ENCODE measurements at regions of chr19 and their contacts with region 1.

Region 1: DNA sequence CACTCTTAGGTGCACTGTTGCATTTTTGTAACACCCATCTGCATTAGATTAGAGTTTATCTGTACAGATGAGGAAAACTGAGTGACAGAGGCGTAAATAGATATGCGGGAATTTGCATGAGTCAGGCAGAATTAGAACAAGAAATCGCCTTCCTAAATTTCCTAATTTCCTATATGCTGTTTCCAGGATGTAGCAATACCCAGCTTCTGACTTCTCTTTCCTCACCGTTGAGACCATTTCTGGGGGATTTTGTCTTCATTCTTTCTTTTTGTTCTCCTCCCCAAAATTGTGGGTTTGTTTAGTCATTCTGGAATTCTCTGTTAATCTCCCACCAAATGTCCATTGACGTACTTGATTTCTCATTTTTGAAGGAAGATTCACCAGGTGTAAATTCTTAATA is 10.6 kb upstream of the ZNF792 start:
- DNase-seq: no peak
- ATAC-seq: no peak
- H3K4me3 Mint-ChIP-seq: peak overlapping the region in 7 of 10 donors; percentile 8 to 90 (median 75)
- H3K27ac Mint-ChIP-seq: peak overlapping the region in 9 of 10 donors; percentile 69 to 95 (median 94)
- H3K4me1 Mint-ChIP-seq: peaks cover 17 to 52% (median 33%) of the 10 kb centered on the region in 4 donors
- H3K27me3 Mint-ChIP-seq: peaks cover 0 to 2% (median 0%) of the 10 kb centered on the region in 5 donors

Region 2: DNA sequence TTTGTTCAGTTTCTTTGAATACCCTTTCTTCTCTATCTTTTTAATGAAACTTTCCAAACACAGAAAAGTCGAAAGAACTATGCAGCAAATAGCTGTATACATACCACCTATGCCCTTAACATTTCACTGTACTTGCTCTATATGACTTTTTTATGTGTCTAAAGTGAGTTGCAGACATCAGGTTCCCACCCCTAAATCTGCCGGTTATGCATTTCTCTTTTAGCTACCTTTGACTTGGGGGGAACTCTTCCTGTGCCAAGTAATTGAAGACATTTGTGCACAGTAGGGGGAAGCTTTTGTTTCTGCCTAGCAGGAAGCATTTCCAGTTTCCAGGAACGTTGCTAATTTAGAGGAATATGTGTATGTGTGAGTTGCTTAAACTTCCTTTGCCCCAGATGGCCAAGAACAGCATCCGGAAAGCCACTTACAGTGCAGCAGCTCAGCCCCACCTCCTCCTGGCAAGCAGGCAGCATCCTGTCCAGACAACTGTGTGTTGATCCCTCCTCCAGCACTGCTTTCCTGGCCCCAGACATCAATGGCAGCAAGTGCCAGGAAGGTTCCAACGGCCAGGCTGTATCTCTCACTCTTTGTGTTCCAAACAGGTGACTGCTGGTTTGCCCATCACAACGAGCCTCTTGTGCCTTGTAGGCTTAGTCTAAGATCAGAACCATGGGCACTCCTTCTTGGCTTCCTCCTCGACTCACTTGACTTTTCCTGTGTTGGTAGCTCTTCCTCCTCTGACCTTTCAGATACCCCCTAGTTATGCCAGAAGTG is 10.8 kb after region 1 on chr19:
- POLR2A ChIA-PET with region 1: interaction called, 1,459 read pairs
- DNase-seq: peak in 4 of 10 donors; percentile 29 to 56 (median 36)
- ATAC-seq: peak; percentile 86 to 92
- H3K4me3 Mint-ChIP-seq: peak overlapping the region; percentile 22 to 78 (median 70)
- H3K27ac Mint-ChIP-seq: peak overlapping the region; percentile 26 to 97 (median 91)
- H3K4me1 Mint-ChIP-seq: peaks cover 8 to 55% (median 28%) of the 10 kb centered on the region in 4 donors
- H3K27me3 Mint-ChIP-seq: no peaks in the 10 kb centered on the region